ENCODE measurements at regions of chr1 and their contacts with region 1.

Region 1: GRCh38 chr1:198788561-198789064 is 149.8 kb downstream of the PTPRC start:
- DNase-seq: peak; percentile 29
- ATAC-seq: no peak
- H3K4me3 ChIP-seq: no peak overlapping the region
- H3K27ac ChIP-seq: no peak overlapping the region
- H3K4me1 ChIP-seq: no peaks in the 10 kb centered on the region
- H3K27me3 ChIP-seq: no peaks in the 10 kb centered on the region
- CTCF ChIP-seq: peak; percentile 52

Region 2: DNA sequence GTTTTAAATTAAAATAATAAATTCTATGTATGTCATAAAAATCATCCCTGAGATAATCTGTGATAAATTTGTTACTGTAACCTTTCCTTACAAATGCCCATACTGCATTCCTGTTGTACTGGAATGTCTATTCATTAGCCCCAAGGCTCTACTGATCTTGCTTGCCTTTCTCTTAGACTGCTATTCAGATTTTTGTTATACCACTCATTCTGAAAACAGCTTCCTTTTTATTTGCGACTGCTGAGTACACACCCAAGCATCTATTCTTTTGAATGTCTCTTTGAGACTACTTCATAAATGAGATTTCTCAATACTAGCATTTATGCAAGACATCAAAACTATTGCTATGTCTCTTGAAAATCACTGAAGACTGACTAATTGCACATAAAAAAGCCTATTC is 1052.0 kb before region 1 on chr1:
- CTCF ChIA-PET with region 1: no interaction called
- POLR2A ChIA-PET with region 1: interaction called, 18 read pairs
- intact Hi-C with region 1: no loop called
- DNase-seq: peak; percentile 47
- ATAC-seq: peak; percentile 45
- H3K4me3 ChIP-seq: no peak overlapping the region
- H3K27ac ChIP-seq: no peak overlapping the region
- H3K4me1 ChIP-seq: peaks cover 5% of the 10 kb centered on the region
- H3K27me3 ChIP-seq: no peaks in the 10 kb centered on the region
- CTCF ChIP-seq: no peak

Region 3: GRCh38 chr1:198809247-198809646 is 20.6 kb after region 1 on chr1:
- CTCF ChIA-PET with region 1: no interaction called
- POLR2A ChIA-PET with region 1: no interaction called
- intact Hi-C with region 1: no loop called
- DNase-seq: no peak
- ATAC-seq: no peak; the same call in 1 of the 2 replicates
- H3K4me3 ChIP-seq: no peak overlapping the region
- H3K27ac ChIP-seq: no peak overlapping the region
- H3K4me1 ChIP-seq: no peaks in the 10 kb centered on the region
- H3K27me3 ChIP-seq: no peaks in the 10 kb centered on the region
- CTCF ChIP-seq: no peak

Region 4: DNA sequence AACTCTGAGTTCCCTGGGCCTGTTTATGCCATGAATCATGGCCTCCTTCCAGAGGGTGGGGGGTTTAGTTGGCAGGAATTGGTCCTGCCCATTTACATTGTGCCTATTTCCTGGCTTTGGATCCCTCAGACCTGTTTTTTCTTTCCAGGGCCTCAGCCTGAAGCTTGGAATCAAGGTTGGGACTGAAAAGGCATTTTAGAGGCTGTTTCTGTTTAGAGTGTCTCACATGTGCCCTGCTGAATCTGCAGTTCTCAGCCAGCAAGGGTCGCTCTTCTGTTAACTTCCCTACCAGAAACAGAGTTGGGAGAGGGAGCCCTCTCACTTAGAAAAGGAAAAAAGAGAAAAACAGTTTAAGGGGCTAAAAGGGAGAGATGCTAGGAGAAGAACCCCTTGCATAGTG is 41.3 kb after region 1 on chr1:
- CTCF ChIA-PET with region 1: no interaction called
- POLR2A ChIA-PET with region 1: interaction called, 10 read pairs
- intact Hi-C with region 1: no loop called
- DNase-seq: no peak
- ATAC-seq: no peak
- H3K4me3 ChIP-seq: no peak overlapping the region
- H3K27ac ChIP-seq: no peak overlapping the region
- H3K4me1 ChIP-seq: no peaks in the 10 kb centered on the region; the same call in 1 of the 2 replicates
- H3K27me3 ChIP-seq: no peaks in the 10 kb centered on the region
- CTCF ChIP-seq: no peak